PC-3 (cell line): ENCODE measurements at regions of chr7 and their contacts with region 1.

Region 1: DNA sequence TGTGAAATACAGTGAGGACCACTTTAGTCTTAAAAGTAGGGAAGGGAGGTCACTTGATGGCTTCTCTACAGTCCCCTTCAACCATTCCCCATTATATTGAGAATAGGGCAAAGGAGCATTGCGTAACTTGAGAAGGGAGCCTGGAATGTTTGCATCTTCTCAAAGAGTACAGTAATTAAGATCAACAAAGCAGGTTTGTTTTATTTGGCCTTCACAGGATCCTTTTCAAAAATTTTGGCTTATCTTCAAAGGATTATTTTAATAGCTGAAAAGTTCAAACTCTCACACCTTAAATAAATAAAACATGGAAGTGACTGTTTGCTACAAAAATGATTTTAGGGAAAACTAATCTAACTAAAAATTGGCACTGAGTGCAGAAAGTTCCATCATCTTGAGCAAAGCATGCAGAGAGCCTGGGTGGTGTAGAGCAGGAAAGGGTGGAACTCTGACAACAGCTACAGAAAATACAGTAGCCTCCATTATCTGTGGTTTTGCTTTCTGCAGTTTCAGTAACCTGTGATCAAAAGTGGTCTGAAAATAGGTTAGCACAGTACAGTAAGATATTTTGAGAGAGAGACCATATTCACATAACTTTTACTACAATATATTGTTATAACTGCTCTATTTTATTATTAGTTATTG is 214.0 kb downstream of the MDFIC start:
- DNase-seq: peak; percentile 80
- ATAC-seq: peak; percentile 83
- H3K4me3 ChIP-seq: peak overlapping the region; percentile 30
- H3K27ac ChIP-seq: peak overlapping the region; percentile 85
- H3K4me1 ChIP-seq: peaks cover 29% of the 10 kb centered on the region
- H3K27me3 ChIP-seq: no peaks in the 10 kb centered on the region
- CTCF ChIP-seq: no peak

Region 2: DNA sequence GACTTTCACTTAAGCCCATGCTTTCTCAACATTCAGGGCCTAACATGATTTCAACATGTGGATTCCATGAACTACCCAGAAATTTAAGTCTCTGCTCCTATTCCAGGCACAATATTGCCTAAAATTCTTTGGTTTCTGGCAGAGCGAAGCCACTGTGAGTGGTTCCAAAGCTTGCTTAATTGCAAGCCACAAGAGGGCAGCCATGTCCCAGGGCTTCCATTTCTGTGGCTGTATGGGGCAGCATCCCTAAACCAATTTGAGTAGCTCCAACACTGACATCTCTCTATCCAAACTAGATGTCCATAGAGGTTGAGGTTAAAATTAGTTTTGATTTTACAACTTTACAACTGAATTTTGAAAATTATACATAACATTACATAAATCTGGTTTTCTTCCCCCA is 270.3 kb before region 1 on chr7:
- CTCF ChIA-PET with region 1: no interaction called
- POLR2A ChIA-PET with region 1: no interaction called
- intact Hi-C with region 1: loop called (anchors 1 kb)
- DNase-seq: peak; percentile 60
- ATAC-seq: peak; percentile 82; the same call in 1 of the 2 replicates
- H3K4me3 ChIP-seq: no peak overlapping the region
- H3K27ac ChIP-seq: no peak overlapping the region
- H3K4me1 ChIP-seq: peaks cover 11% of the 10 kb centered on the region
- H3K27me3 ChIP-seq: no peaks in the 10 kb centered on the region
- CTCF ChIP-seq: peak; percentile 87

Region 3: GRCh38 chr7:114922016-114922651 is 213.8 kb before region 1 on chr7 and contains the start of gene MDFIC:
- CTCF ChIA-PET with region 1: no interaction called
- POLR2A ChIA-PET with region 1: interaction called, 3 read pairs
- intact Hi-C with region 1: loop called (anchors 5 kb)
- DNase-seq: peak; percentile 45
- ATAC-seq: peak; percentile 61
- H3K4me3 ChIP-seq: peak within 1 kb of the TSS; percentile 78
- H3K27ac ChIP-seq: peak within 1 kb of the TSS; percentile 11
- H3K4me1 ChIP-seq: peaks cover 13% of the 10 kb centered on the region
- H3K27me3 ChIP-seq: no peaks in the 10 kb centered on the region
- CTCF ChIP-seq: no peak
- total RNA-seq, gene MDFIC: 31.6 and 33.9 TPM in 2 replicates

Region 4: GRCh38 chr7:115009736-115010440 is 126.0 kb before region 1 on chr7:
- CTCF ChIA-PET with region 1: no interaction called
- POLR2A ChIA-PET with region 1: no interaction called
- intact Hi-C with region 1: loop called (anchors 10 kb)
- DNase-seq: no peak
- ATAC-seq: peak; percentile 58
- H3K4me3 ChIP-seq: no peak overlapping the region
- H3K27ac ChIP-seq: no peak overlapping the region
- H3K4me1 ChIP-seq: peaks cover 16% of the 10 kb centered on the region
- H3K27me3 ChIP-seq: no peaks in the 10 kb centered on the region
- CTCF ChIP-seq: no peak

Region 5: GRCh38 chr7:115217373-115217772 is 81.5 kb after region 1 on chr7:
- CTCF ChIA-PET with region 1: no interaction called
- POLR2A ChIA-PET with region 1: no interaction called
- intact Hi-C with region 1: loop called (anchors 5 kb)
- DNase-seq: peak; percentile 34
- ATAC-seq: peak; percentile 38; the same call in 1 of the 2 replicates
- H3K4me3 ChIP-seq: no peak overlapping the region
- H3K27ac ChIP-seq: no peak overlapping the region
- H3K4me1 ChIP-seq: peaks cover 6% of the 10 kb centered on the region; the same call in 1 of the 2 replicates
- H3K27me3 ChIP-seq: no peaks in the 10 kb centered on the region
- CTCF ChIP-seq: peak; percentile 59

Region 6: DNA sequence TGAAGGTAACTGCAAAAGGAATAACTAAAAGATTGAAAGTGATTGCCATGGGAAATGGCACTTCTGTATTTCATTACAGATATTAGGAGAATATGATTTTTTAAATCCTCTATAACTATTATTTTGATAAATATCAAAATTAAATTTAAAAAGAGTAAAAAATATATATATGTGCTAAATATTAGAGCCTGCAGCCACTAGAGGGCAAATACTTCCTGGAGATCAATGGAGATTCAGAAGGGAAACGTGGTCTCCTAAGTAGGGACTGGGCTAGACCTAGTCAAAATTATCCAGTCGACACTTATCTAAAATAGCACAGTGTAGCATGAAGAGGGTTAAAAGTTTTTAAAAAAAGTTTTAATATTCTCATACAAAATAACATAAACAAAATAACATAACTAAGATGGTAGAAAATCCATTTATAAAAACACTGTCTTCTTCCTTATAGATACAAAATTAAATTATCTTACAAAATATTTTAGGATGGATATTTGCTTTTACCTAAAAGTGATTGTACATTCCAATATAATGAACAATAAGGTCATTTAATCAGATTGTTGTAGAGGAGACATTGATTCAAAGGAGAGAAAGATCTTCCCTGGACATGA is 220.4 kb after region 1 on chr7:
- CTCF ChIA-PET with region 1: no interaction called
- POLR2A ChIA-PET with region 1: no interaction called
- intact Hi-C with region 1: loop called (anchors 5 kb)
- DNase-seq: peak; percentile 48
- ATAC-seq: 0 out of 2 replicates have a peak, but pooled peaks have one; percentile 28
- H3K4me3 ChIP-seq: no peak overlapping the region
- H3K27ac ChIP-seq: no peak overlapping the region
- H3K4me1 ChIP-seq: peaks cover 15% of the 10 kb centered on the region
- H3K27me3 ChIP-seq: no peaks in the 10 kb centered on the region
- CTCF ChIP-seq: peak; percentile 46